ENCODE measurements at regions of chr12 and their contacts with region 1.

Region 1: GRCh38 chr12:54526812-54527630 is 22.4 kb upstream of the PDE1B start:
- DNase-seq: no peak
- H3K4me3 ChIP-seq: no peak overlapping the region
- H3K27ac ChIP-seq: no peak overlapping the region
- H3K4me1 ChIP-seq: no peaks in the 10 kb centered on the region
- H3K27me3 ChIP-seq: no peaks in the 10 kb centered on the region
- CTCF ChIP-seq: peak; percentile 30 to 51 (median 48)
- EP300 ChIP-seq: no peak
- POLR2A ChIP-seq: no peak

Region 2: GRCh38 chr12:54571193-54572188 is 44.5 kb after region 1 on chr12:
- intact Hi-C with region 1: loop called (anchors 5 kb)
- DNase-seq: no peak
- H3K4me3 ChIP-seq: no peak overlapping the region
- H3K27ac ChIP-seq: no peak overlapping the region
- H3K4me1 ChIP-seq: no peaks in the 10 kb centered on the region
- H3K27me3 ChIP-seq: no peaks in the 10 kb centered on the region
- CTCF ChIP-seq: no peak
- EP300 ChIP-seq: no peak
- POLR2A ChIP-seq: no peak